Colonic mucosa (tissue), 4 donors: ENCODE measurements at regions of chr5 and their contacts with region 1.

Region 1: GRCh38 chr5:81878333-81878732 is 93.5 kb upstream of the ATG10 start:
- DNase-seq: no peak
- H3K4me3 ChIP-seq: no peak overlapping the region
- H3K27ac ChIP-seq: no peak overlapping the region
- H3K4me1 ChIP-seq: no peaks in the 10 kb centered on the region
- H3K27me3 ChIP-seq: no peaks in the 10 kb centered on the region
- CTCF ChIP-seq: no peak

Region 2: DNA sequence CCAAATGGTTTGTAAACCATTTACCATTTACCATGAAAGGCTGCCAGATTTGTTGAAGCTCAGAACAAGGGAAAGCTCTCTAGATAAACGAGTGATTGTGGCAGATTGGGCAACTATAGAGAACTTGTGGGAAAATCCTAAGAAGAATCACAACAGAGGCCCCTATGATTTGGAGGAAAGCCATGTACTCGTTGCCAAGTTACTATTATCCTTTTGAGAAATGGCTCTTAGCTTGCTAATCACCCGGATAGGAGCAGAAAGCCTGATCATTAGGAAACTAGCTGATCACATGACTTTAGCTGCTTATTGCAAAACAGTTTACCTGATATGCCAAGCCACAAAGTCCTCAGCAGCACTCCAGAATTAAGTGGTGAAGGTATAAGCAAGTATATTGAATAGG is 70.0 kb after region 1 on chr5:
- intact Hi-C with region 1: loop called (anchors 5 kb)
- DNase-seq: no peak
- H3K4me3 ChIP-seq: no peak overlapping the region
- H3K27ac ChIP-seq: no peak overlapping the region
- H3K4me1 ChIP-seq: no peaks in the 10 kb centered on the region
- H3K27me3 ChIP-seq: no peaks in the 10 kb centered on the region
- CTCF ChIP-seq: no peak

Region 3: GRCh38 chr5:81961651-81962440 is 83.5 kb after region 1 on chr5:
- intact Hi-C with region 1: no loop called
- DNase-seq: no peak
- H3K4me3 ChIP-seq: no peak overlapping the region
- H3K27ac ChIP-seq: no peak overlapping the region
- H3K4me1 ChIP-seq: no peaks in the 10 kb centered on the region
- H3K27me3 ChIP-seq: no peaks in the 10 kb centered on the region
- CTCF ChIP-seq: no peak

Region 4: DNA sequence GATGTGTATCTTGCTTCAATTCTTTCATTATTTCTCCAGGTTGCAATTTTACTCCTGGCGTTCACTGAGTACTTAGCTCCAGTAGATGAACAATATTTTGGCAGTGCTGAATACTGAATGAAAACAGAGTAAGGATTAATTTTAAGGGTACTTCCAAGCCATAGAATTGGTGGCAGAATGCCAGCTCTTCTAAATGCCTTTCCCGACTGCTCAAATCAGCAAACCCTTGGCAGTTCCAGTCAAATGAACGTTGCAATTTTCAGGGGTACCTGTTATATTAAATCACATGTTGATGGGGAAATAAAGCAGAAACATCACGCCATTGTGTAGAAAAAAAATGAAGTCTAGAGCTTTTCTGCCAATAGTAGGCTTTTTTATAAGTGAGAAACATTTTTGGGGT is 682.2 kb after region 1 on chr5:
- intact Hi-C with region 1: no loop called
- DNase-seq: no peak
- H3K4me3 ChIP-seq: no peak overlapping the region
- H3K27ac ChIP-seq: no peak overlapping the region
- H3K4me1 ChIP-seq: no peaks in the 10 kb centered on the region
- H3K27me3 ChIP-seq: no peaks in the 10 kb centered on the region
- CTCF ChIP-seq: no peak